ENCODE measurements at regions of chr1 and their contacts with region 1.

Region 1: GRCh38 chr1:109532365-109533136 is 7.1 kb upstream of the GPR61 start:
- DNase-seq: peak; percentile 86
- H3K4me3 ChIP-seq: peak overlapping the region in 1 of 2 experiments; percentile 44; a peak in 1 of 4 replicates
- H3K27ac ChIP-seq: peak overlapping the region in 1 of 2 experiments; percentile 70; a peak in 1 of 4 replicates
- H3K4me1 ChIP-seq: peaks cover 0 to 48% of the 10 kb centered on the region in 2 experiments; a peak in 1 of 4 replicates
- H3K27me3 ChIP-seq: no peaks in the 10 kb centered on the region
- CTCF ChIP-seq: peak; percentile 84
- EP300 ChIP-seq: no peak
- RAD21 ChIP-seq: peak; percentile 93

Region 2: GRCh38 chr1:109248797-109249642 is 283.5 kb before region 1 on chr1 and contains the start of gene CELSR2:
- CTCF ChIA-PET with region 1: interaction called, 10 read pairs
- POLR2A ChIA-PET with region 1: no interaction called
- DNase-seq: peak; percentile 95
- H3K4me3 ChIP-seq: peak within 1 kb of the TSS; percentile 58 to 70
- H3K27ac ChIP-seq: peak within 1 kb of the TSS in 1 of 2 experiments; percentile 62; a peak in 1 of 4 replicates
- H3K4me1 ChIP-seq: peaks cover 0 to 31% of the 10 kb centered on the region in 2 experiments; a peak in 1 of 4 replicates
- H3K27me3 ChIP-seq: no peaks in the 10 kb centered on the region
- CTCF ChIP-seq: no peak; the same call in 1 of the 2 replicates
- EP300 ChIP-seq: no peak
- RAD21 ChIP-seq: no peak
- polyA plus RNA-seq, gene CELSR2: 1.7 and 3.5 TPM in 2 replicates

Region 3: DNA sequence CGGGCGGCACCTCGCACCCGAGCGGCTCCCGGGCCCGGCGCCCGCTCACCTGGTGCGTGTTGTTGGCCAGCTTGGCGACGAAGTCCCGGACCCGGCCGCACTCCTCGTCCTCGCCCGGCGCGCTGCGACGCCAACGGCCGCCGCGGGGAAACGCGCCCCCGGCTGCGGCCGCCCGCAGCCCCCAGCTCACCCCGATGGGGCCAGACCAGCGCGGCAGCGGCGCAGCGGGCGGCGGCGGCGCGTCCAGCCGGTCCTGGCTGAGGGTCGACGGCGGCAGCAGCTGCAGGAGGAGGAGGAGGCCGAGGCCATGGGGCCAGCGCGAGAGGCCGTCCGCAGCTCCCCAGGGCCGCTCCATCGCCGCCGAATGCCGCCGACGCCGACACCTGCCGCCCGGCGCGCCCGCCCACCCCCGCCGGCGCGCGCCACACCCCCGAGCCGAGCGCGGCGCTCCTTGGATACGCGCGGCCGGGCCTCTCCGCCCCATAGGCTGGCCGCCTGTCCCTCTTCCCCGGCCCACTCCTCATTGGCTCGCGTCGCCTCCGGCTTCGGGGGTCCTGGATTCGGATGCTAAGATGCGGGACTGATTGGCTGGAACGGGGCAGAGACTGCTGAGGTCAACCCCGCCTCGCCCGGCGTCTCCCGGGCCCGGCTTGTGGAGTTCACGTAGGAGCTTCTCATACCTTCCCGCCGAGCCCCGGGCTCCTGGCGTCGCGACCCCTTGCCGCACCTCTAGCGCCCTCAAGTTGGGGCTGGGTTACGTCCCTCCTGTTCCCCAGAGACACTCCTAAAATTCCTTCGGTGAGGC is 134.8 kb before region 1 on chr1 and contains the start of gene SORT1:
- CTCF ChIA-PET with region 1: interaction called, 20 read pairs
- POLR2A ChIA-PET with region 1: no interaction called
- DNase-seq: peak; percentile 96
- H3K4me3 ChIP-seq: peak within 1 kb of the TSS; percentile 72 to 88
- H3K27ac ChIP-seq: peak within 1 kb of the TSS; percentile 39 to 82; a peak in 3 of 4 replicates
- H3K4me1 ChIP-seq: peaks cover 14 to 19% of the 10 kb centered on the region in 2 experiments; a peak in 3 of 4 replicates
- H3K27me3 ChIP-seq: no peaks in the 10 kb centered on the region
- CTCF ChIP-seq: no peak; the same call in 1 of the 2 replicates
- EP300 ChIP-seq: no peak
- RAD21 ChIP-seq: no peak; the same call in 1 of the 2 replicates
- polyA plus RNA-seq, gene SORT1: 8.5 and 13.7 TPM in 2 replicates

Region 4: GRCh38 chr1:109468903-109469302 is 63.6 kb before region 1 on chr1:
- CTCF ChIA-PET with region 1: interaction called, 12 read pairs
- POLR2A ChIA-PET with region 1: no interaction called
- DNase-seq: no peak
- H3K4me3 ChIP-seq: no peak overlapping the region
- H3K27ac ChIP-seq: no peak overlapping the region
- H3K4me1 ChIP-seq: no peaks in the 10 kb centered on the region; a peak in 1 of 4 replicates
- H3K27me3 ChIP-seq: peaks cover 96% of the 10 kb centered on the region
- CTCF ChIP-seq: no peak
- EP300 ChIP-seq: no peak
- RAD21 ChIP-seq: no peak

Region 5: DNA sequence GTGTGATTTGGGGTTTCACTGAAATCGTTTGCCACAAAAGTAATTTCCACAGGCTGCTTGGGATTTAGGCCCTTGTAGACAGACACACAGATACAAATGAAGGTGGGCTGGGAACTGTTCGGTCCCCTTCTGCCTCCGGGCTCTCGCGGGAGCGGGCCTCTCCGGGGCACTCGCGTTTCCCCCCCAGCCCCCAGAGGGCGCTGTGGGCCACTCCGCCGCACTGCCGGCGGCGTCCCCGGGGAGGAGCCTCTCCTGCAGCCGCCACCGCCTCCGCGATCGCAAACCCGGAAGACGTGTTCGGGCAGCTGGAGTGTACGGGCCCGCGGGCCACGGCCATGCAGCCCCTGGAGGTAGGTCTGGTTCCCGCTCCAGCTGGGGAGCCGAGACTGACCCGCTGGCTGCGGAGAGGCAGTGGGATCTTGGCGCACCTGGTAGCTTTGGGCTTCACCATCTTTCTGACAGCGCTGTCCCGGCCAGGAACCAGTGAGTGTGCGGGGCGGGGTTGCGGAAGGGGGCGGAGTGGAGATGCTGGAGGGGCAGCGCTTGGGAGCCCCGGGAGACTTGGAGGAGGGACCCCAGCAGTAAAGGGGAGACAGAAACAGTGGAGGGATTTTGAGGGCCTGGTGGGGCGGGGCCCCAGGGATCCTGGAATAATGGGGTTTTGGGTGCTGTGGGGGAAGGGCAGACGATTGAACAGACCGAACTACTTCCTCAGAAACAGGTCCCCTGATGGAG is 38.6 kb before region 1 on chr1 and contains the start of gene CYB561D1:
- CTCF ChIA-PET with region 1: interaction called, 1,710 read pairs
- POLR2A ChIA-PET with region 1: interaction called, 13 read pairs
- DNase-seq: peak; percentile 95
- H3K4me3 ChIP-seq: peak within 1 kb of the TSS; percentile 96 to 100
- H3K27ac ChIP-seq: peak within 1 kb of the TSS; percentile 64 to 81; a peak in 3 of 4 replicates
- H3K4me1 ChIP-seq: peaks cover 0 to 19% of the 10 kb centered on the region in 2 experiments; a peak in 2 of 4 replicates
- H3K27me3 ChIP-seq: no peaks in the 10 kb centered on the region
- CTCF ChIP-seq: peak; percentile 89
- EP300 ChIP-seq: peak; percentile 27 to 38; a peak in 1 of 4 replicates
- RAD21 ChIP-seq: peak; percentile 51
- polyA plus RNA-seq, gene CYB561D1: 5.4 and 8.9 TPM in 2 replicates

Region 6: GRCh38 chr1:109516872-109517271 is 15.7 kb before region 1 on chr1:
- CTCF ChIA-PET with region 1: interaction called, 1,710 read pairs
- POLR2A ChIA-PET with region 1: no interaction called
- DNase-seq: no peak
- H3K4me3 ChIP-seq: no peak overlapping the region
- H3K27ac ChIP-seq: no peak overlapping the region
- H3K4me1 ChIP-seq: peaks cover 0 to 8% of the 10 kb centered on the region in 2 experiments; a peak in 1 of 4 replicates
- H3K27me3 ChIP-seq: no peaks in the 10 kb centered on the region; the same call in 1 of the 2 replicates
- CTCF ChIP-seq: no peak
- EP300 ChIP-seq: no peak
- RAD21 ChIP-seq: no peak

Region 7: GRCh38 chr1:109643385-109644230 is 111.1 kb after region 1 on chr1:
- CTCF ChIA-PET with region 1: interaction called, 297 read pairs
- POLR2A ChIA-PET with region 1: no interaction called
- DNase-seq: peak; percentile 49
- H3K4me3 ChIP-seq: no peak overlapping the region
- H3K27ac ChIP-seq: peak overlapping the region in 1 of 2 experiments; percentile 29; a peak in 1 of 4 replicates
- H3K4me1 ChIP-seq: peaks cover 0 to 41% of the 10 kb centered on the region in 2 experiments; a peak in 2 of 4 replicates
- H3K27me3 ChIP-seq: no peaks in the 10 kb centered on the region
- CTCF ChIP-seq: peak; percentile 70
- EP300 ChIP-seq: no peak
- RAD21 ChIP-seq: peak; percentile 43